Activated CD4-positive, alpha-beta T cell treated with anti-CD3 and anti-CD28 coated beads for 36 hours (primary cell): ENCODE measurements at regions of chr10 and their contacts with region 1.

Region 1: GRCh38 chr10:91251430-91252056 is 31.1 kb downstream of the PCGF5 start:
- DNase-seq: peak; percentile 60
- ATAC-seq: no peak
- H3K4me3 Mint-ChIP-seq: no peak overlapping the region
- H3K27ac Mint-ChIP-seq: no peak overlapping the region
- H3K4me1 Mint-ChIP-seq: peaks cover 4% of the 10 kb centered on the region
- H3K27me3 Mint-ChIP-seq: no peaks in the 10 kb centered on the region

Region 2: DNA sequence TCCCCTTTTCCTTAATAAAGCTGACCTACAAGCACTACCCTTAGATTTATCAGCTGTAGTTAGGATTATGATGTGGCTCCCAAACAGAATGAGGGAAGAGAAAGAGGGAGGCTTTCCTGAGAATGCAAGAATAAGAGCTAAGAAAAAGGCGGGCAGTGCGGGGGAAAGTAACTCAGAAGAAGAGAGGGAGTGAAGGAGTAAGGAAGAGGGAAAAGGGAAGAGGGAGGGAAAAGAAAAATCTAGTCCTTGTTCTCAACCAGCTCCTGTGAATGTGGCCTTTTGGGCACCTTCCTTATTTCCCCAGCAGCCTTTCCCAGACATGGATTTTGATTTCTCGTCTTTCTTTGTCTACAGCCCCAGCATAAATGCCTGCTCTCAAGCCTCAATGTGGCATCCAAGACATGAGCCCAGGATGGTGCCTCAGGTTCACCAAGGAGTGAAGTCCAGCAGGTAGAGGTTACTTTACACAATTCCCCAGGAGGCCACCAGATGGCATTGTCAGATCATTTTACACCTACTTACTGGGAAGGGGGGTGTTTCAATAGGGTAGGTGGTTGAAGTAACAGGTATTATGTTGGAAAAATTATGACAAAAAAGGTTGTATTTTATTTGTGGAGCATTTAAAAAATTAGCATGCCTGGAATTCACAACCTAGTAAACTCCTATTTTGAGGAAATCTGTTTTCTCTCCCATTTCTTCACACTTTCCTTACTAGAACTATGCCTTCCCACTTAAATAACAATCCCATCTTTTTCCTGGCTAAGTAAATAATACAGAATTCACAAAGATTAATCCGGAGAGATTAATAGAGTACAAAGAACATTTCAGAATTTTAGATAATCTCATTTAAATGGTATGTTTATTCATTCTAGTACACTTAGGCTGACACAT is 500.2 kb before region 1 on chr10:
- CTCF ChIA-PET with region 1: interaction called, 5 read pairs
- POLR2A ChIA-PET with region 1: no interaction called
- intact Hi-C with region 1: loop called in 1 of 2 experiments (anchors 10 kb)
- DNase-seq: peak; percentile 62
- ATAC-seq: peak; percentile 58
- H3K4me3 Mint-ChIP-seq: no peak overlapping the region
- H3K27ac Mint-ChIP-seq: no peak overlapping the region
- H3K4me1 Mint-ChIP-seq: no peaks in the 10 kb centered on the region
- H3K27me3 Mint-ChIP-seq: peaks cover 11% of the 10 kb centered on the region

Region 3: GRCh38 chr10:90885176-90885575 is 366.4 kb before region 1 on chr10:
- CTCF ChIA-PET with region 1: interaction called, 19 read pairs
- POLR2A ChIA-PET with region 1: interaction called, 7 read pairs
- intact Hi-C with region 1: loop called in 1 of 2 experiments (anchors 1 kb)
- DNase-seq: no peak
- ATAC-seq: no peak
- H3K4me3 Mint-ChIP-seq: no peak overlapping the region
- H3K27ac Mint-ChIP-seq: no peak overlapping the region
- H3K4me1 Mint-ChIP-seq: no peaks in the 10 kb centered on the region
- H3K27me3 Mint-ChIP-seq: no peaks in the 10 kb centered on the region

Region 4: DNA sequence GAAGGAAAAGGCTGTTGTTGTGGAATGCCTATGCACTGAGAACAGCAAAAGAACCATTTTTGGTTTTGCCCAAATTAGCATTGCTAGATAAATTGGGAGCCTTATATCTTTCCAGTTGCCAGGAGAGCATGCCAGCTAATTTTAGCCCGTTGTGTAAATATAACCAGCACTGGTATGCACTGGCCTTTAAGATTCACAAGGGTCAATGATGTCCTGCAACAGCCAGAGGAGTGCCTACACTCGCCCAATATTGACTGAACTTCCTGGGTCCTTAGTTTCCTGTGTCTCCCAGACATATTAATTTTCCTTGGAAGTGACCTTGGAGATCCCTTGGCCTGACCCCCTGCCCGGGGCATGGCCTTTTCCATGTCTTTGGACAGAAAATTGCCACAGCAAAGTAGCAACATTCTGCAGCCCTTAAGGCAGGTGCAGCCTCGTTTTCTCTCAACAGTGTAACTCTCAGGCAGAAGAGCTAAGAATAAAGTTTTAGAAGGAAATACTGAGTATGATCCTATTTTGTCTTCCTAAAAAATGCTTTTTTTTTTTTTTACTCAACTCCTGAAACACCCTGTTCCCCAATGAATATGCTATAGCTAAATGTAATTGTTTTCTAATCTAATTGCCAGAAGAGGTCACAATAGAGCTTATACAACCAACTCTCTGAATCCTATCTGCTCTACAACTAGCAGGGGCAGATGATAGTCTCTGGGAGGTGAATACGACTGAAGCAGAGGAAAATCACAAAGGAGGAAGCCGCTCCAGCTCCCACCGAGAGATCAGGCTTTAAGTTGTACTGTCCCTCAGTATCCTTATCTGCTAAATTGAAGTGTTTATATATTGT is 163.0 kb before region 1 on chr10:
- CTCF ChIA-PET with region 1: interaction called, 43 read pairs
- POLR2A ChIA-PET with region 1: interaction called, 4 read pairs
- intact Hi-C with region 1: loop called (anchors 1 kb)
- DNase-seq: no peak
- ATAC-seq: no peak
- H3K4me3 Mint-ChIP-seq: no peak overlapping the region
- H3K27ac Mint-ChIP-seq: no peak overlapping the region
- H3K4me1 Mint-ChIP-seq: no peaks in the 10 kb centered on the region
- H3K27me3 Mint-ChIP-seq: no peaks in the 10 kb centered on the region

Region 5: DNA sequence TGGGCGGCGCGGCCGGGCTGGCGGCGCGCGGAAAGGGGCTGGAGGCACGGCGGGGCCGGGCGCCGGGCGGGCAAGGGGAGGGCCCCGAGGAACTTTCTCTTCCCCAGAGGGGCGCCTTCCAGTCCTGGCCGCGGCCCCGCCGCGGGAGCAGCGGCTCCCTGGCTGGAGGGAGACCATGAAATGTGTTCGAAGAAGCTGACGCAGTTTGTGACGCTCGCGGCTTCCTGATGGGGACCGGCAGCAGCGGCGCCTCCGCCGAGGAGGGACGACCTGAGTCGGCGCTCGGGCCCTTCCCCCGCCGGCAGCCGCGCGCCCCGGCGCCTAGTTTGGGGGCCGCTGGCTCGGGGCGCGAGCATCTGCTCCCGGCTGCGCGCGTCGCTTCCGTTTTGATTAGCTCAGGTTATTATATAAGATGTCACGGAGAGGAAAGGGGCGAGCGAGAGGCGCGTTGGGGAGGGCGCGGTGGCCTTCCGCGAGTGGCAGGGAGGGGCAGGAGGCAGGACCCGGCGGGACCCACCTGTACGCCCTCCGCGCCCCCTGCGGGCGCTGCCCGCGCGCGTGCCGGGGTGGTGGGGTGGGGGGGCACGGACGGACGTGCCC is 88.2 kb before region 1 on chr10:
- CTCF ChIA-PET with region 1: interaction called, 19 read pairs
- POLR2A ChIA-PET with region 1: no interaction called
- intact Hi-C with region 1: loop called in 1 of 2 experiments (anchors 5 kb)
- DNase-seq: peak; percentile 83
- ATAC-seq: peak; percentile 62
- H3K4me3 Mint-ChIP-seq: peak overlapping the region; percentile 81
- H3K27ac Mint-ChIP-seq: peak overlapping the region; percentile 91
- H3K4me1 Mint-ChIP-seq: peaks cover 34% of the 10 kb centered on the region
- H3K27me3 Mint-ChIP-seq: no peaks in the 10 kb centered on the region

Region 6: DNA sequence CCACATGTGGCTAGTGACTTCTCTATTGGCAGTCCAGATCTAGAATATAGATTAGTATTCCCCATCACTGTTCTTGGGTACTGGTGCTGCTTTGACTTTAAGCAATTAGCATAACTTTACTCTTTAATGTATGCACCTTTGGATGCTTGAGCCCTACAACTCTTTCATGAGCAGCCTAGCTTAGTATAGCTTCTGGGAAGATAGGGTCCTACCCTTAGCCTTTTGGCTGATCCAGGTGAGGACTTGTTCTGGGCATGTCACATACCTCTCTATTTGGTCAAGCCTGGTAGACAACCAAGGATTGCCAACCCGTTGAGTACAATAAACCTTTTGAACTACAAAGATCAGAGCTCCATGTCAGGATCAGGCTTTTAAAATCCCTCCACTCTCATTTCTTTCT is 13.4 kb before region 1 on chr10:
- CTCF ChIA-PET with region 1: interaction called, 26 read pairs
- POLR2A ChIA-PET with region 1: no interaction called
- intact Hi-C with region 1: no loop called
- DNase-seq: no peak
- ATAC-seq: no peak
- H3K4me3 Mint-ChIP-seq: no peak overlapping the region
- H3K27ac Mint-ChIP-seq: no peak overlapping the region
- H3K4me1 Mint-ChIP-seq: peaks cover 16% of the 10 kb centered on the region
- H3K27me3 Mint-ChIP-seq: no peaks in the 10 kb centered on the region